ENCODE measurements at regions of chr4 and their contacts with region 1.

Region 1: GRCh38 chr4:25527034-25527433 is 128.6 kb upstream of the SLC34A2 start:
- DNase-seq: no peak
- H3K4me3 ChIP-seq: no peak overlapping the region
- H3K27ac ChIP-seq: no peak overlapping the region
- H3K4me1 ChIP-seq: no peaks in the 10 kb centered on the region
- H3K27me3 ChIP-seq: no peaks in the 10 kb centered on the region
- CTCF ChIP-seq: no peak
- EP300 ChIP-seq: no peak
- POLR2A ChIP-seq: no peak

Region 2: GRCh38 chr4:25358515-25359275 is 168.3 kb before region 1 on chr4:
- in situ Hi-C with region 1: no loop called
- intact Hi-C with region 1: no loop called
- DNase-seq: peak; percentile 38
- H3K4me3 ChIP-seq: no peak overlapping the region
- H3K27ac ChIP-seq: no peak overlapping the region
- H3K4me1 ChIP-seq: no peaks in the 10 kb centered on the region
- H3K27me3 ChIP-seq: no peaks in the 10 kb centered on the region
- CTCF ChIP-seq: no peak
- EP300 ChIP-seq: no peak
- POLR2A ChIP-seq: no peak

Region 3: GRCh38 chr4:25474690-25475089 is 52.3 kb before region 1 on chr4:
- in situ Hi-C with region 1: no loop called
- intact Hi-C with region 1: loop called (anchors 2 kb)
- DNase-seq: no peak
- H3K4me3 ChIP-seq: no peak overlapping the region
- H3K27ac ChIP-seq: no peak overlapping the region
- H3K4me1 ChIP-seq: no peaks in the 10 kb centered on the region
- H3K27me3 ChIP-seq: no peaks in the 10 kb centered on the region
- CTCF ChIP-seq: no peak
- EP300 ChIP-seq: no peak
- POLR2A ChIP-seq: no peak

Measured in transverse colon (tissue), 4 donors.